ENCODE measurements at regions of chr6 and their contacts with region 1.

Region 1: DNA sequence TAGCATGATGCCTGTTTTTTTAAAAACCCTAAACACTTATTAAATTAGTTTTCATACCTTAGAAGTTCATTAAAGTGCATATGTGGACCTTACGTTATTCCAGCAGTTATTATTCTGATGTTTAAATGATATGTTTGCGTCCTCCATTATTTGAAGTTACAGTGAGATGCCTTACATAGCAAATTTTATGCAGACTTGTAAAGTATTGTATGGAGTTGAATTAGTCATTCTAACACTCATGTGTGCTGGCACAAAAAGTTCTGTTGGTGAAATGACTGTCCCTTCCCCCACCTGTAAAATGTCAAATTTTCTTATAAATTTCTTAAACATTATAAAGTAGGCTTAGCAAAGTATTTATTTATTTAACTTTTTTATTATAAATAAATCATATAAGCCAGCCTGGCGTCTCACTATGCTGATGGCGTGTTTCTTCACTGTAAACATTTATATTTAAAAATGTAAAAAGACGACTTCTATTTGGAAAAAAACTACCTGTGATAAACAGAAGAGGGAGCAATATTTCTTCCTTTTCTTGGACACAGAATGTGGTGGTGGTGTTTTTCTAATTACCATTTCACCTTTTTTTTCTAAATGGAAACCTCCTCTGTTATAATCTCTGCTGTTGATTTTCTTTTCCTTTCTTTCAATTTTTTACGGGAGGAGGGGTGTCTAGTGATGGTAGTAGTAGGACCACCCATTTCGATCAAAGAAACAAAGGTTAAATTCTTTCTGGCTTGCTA is 155.4 kb downstream of the RFPL4B start:
- DNase-seq: peak; percentile 34
- H3K4me3 ChIP-seq: no peak overlapping the region
- H3K27ac ChIP-seq: no peak overlapping the region
- H3K4me1 ChIP-seq: peaks cover 2% of the 10 kb centered on the region
- H3K27me3 ChIP-seq: no peaks in the 10 kb centered on the region
- CTCF ChIP-seq: peak; percentile 23 to 24
- POLR2A ChIP-seq: no peak

Region 2: GRCh38 chr6:112337209-112337638 is 165.3 kb before region 1 on chr6:
- CTCF ChIA-PET with region 1: no interaction called
- POLR2A ChIA-PET with region 1: no interaction called
- dilution Hi-C with region 1: no loop called
- intact Hi-C with region 1: loop called (anchors 2 kb)
- DNase-seq: peak; percentile 89
- H3K4me3 ChIP-seq: no peak overlapping the region
- H3K27ac ChIP-seq: no peak overlapping the region
- H3K4me1 ChIP-seq: peaks cover 8% of the 10 kb centered on the region
- H3K27me3 ChIP-seq: no peaks in the 10 kb centered on the region
- CTCF ChIP-seq: peak; percentile 75 to 85
- POLR2A ChIP-seq: peak; percentile 62

Region 3: DNA sequence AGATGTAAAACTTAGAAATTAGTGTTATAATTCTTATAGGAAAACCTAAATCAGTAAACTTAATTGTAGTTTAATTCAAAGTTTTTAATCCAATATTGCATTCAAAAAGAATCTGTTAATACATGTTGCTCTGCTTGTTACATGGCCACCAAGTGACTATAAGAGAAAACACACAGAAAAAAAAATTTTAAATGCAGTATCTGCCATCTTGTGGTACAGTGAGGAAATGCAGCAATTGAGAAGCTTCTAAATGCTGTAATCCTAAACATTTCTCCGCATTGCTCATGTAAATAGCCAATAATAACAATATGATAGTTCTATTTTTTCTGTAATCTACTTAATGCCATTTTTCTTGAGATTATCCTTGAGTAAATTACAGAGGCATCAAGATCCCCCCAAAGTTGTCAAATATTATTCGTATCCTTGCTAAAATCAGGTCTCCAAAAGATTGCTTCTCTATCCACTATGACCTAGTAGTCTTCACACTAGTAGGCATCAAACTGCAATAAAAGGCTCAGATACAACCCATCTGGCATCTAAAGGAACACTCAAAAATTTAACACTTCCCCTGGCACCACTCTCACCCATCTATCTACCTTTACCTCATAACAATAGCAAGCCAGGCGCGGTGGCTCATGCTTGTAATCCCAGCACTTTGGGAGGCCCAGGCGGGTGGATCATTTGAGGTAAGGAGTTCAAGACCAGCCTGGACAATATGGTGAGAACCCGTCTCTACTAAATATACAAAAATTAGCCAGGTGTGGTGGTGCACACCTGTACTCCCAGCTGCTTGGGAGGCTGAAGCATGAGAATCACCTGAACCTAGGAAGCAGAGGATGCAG is 1433.8 kb after region 1 on chr6:
- CTCF ChIA-PET with region 1: interaction called, 4 read pairs
- POLR2A ChIA-PET with region 1: no interaction called
- dilution Hi-C with region 1: no loop called
- intact Hi-C with region 1: loop called (anchors 10 kb)
- DNase-seq: peak; percentile 86
- H3K4me3 ChIP-seq: no peak overlapping the region
- H3K27ac ChIP-seq: no peak overlapping the region
- H3K4me1 ChIP-seq: no peaks in the 10 kb centered on the region
- H3K27me3 ChIP-seq: no peaks in the 10 kb centered on the region
- CTCF ChIP-seq: peak; percentile 52
- POLR2A ChIP-seq: no peak

Measured in endothelial cell of umbilical vein (primary cell).